Activated B cell treated with CpG ODN at 0.5 μM for 24 hours (primary cell): ENCODE measurements at regions of chr9 and their contacts with region 1.

Region 1: GRCh38 chr9:127779136-127779981 is 893 bp upstream of the SH2D3C start:
- DNase-seq: peak; percentile 63
- ATAC-seq: peak; percentile 61
- H3K4me3 Mint-ChIP-seq: peak overlapping the region; percentile 94
- H3K27ac Mint-ChIP-seq: peak overlapping the region; percentile 98
- H3K4me1 Mint-ChIP-seq: peaks cover 70% of the 10 kb centered on the region
- H3K27me3 Mint-ChIP-seq: no peaks in the 10 kb centered on the region
- CTCF ChIP-seq: no peak

Region 2: DNA sequence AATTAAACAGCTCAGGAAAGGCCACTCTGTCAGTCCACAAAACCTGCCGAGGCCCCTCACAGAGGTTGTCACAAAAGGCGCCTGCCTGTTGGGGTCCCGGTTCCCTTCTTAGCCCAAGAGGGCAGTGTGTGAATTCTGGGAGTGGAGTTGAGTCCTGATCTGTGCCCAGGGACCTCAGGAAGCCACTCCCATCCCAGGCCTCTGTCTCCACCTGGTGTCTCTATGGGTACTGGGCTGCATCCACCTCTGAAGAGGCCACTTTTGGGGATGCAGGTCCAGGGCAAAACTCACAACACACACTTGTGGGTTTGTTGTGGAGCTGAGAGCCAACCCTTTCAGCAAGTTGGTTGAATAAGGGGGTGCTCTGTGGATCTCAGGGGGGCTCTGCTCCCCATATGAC is 241.6 kb before region 1 on chr9:
- CTCF ChIA-PET with region 1: no interaction called
- POLR2A ChIA-PET with region 1: interaction called, 16 read pairs
- intact Hi-C with region 1: no loop called
- DNase-seq: no peak
- ATAC-seq: no peak
- H3K4me3 Mint-ChIP-seq: no peak overlapping the region
- H3K27ac Mint-ChIP-seq: no peak overlapping the region
- H3K4me1 Mint-ChIP-seq: no peaks in the 10 kb centered on the region
- H3K27me3 Mint-ChIP-seq: no peaks in the 10 kb centered on the region
- CTCF ChIP-seq: no peak

Region 3: GRCh38 chr9:127763918-127764384 is 15.4 kb before region 1 on chr9:
- CTCF ChIA-PET with region 1: interaction called, 32 read pairs
- POLR2A ChIA-PET with region 1: interaction called, 96 read pairs
- intact Hi-C with region 1: no loop called
- DNase-seq: no peak
- ATAC-seq: peak; percentile 51
- H3K4me3 Mint-ChIP-seq: no peak overlapping the region
- H3K27ac Mint-ChIP-seq: peak overlapping the region; percentile 60
- H3K4me1 Mint-ChIP-seq: peaks cover 61% of the 10 kb centered on the region
- H3K27me3 Mint-ChIP-seq: no peaks in the 10 kb centered on the region
- CTCF ChIP-seq: no peak

Region 4: GRCh38 chr9:127796225-127796813 is 17.0 kb after region 1 on chr9:
- CTCF ChIA-PET with region 1: no interaction called
- POLR2A ChIA-PET with region 1: interaction called, 11 read pairs
- intact Hi-C with region 1: no loop called
- DNase-seq: no peak
- ATAC-seq: peak; percentile 45
- H3K4me3 Mint-ChIP-seq: peak overlapping the region; percentile 64
- H3K27ac Mint-ChIP-seq: peak overlapping the region; percentile 75
- H3K4me1 Mint-ChIP-seq: peaks cover 32% of the 10 kb centered on the region
- H3K27me3 Mint-ChIP-seq: no peaks in the 10 kb centered on the region
- CTCF ChIP-seq: no peak

Region 5: DNA sequence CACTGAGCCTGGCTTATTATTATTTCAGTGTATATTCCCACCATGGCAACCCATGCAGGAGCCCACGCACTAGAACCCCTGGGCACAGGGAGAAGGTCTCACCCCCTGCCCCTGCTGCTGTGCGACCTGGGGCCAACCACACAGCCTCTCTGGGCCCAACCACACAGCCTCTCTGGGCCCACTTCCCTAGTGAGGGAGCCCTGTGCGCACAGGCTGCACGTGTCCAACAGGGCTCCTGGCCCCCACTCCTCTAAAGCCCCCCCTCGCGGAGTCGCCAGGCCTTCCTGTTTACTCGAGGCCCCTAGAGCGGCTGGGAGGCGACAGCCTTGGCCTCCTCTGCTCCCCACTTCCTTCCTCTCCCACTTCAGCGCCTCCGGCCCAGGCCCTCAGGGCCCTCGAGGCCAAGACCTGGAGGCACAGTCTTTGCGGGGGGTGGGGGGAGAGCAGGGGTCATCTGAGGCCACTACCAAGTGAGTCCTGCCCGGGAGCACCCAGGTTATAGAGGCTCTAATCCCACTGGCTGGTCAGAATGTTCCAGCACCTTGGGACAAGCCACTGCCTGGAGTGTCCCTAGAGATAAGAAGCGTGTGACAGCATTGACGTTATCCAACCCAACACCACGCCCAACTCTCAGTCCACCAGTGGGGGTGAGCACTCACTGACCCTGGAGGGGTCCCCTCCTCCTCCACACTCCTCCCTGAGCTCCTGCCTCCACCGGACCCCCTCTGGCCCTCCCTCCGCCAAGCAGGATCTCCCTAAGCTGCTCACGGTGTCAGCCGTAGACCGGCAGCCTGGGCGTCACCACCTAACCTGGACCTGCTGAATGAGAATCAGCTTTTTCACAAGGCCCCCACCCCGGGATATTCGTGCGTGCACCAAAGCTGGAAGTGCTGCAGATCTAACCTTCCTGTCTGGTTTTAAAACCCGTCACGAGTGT is 83.0 kb after region 1 on chr9:
- CTCF ChIA-PET with region 1: interaction called, 3 read pairs
- POLR2A ChIA-PET with region 1: interaction called, 11 read pairs
- intact Hi-C with region 1: no loop called
- DNase-seq: peak; percentile 48
- ATAC-seq: peak; percentile 60
- H3K4me3 Mint-ChIP-seq: peak overlapping the region; percentile 41
- H3K27ac Mint-ChIP-seq: peak overlapping the region; percentile 93
- H3K4me1 Mint-ChIP-seq: peaks cover 65% of the 10 kb centered on the region
- H3K27me3 Mint-ChIP-seq: no peaks in the 10 kb centered on the region
- CTCF ChIP-seq: no peak

Region 6: GRCh38 chr9:127899128-127899946 is 120.0 kb after region 1 on chr9 and contains the start of gene ST6GALNAC6:
- CTCF ChIA-PET with region 1: no interaction called
- POLR2A ChIA-PET with region 1: interaction called, 10 read pairs
- intact Hi-C with region 1: no loop called
- DNase-seq: peak; percentile 84
- ATAC-seq: peak; percentile 81
- H3K4me3 Mint-ChIP-seq: peak within 1 kb of the TSS; percentile 88
- H3K27ac Mint-ChIP-seq: peak within 1 kb of the TSS; percentile 76
- H3K4me1 Mint-ChIP-seq: peaks cover 55% of the 10 kb centered on the region
- H3K27me3 Mint-ChIP-seq: no peaks in the 10 kb centered on the region
- CTCF ChIP-seq: no peak
- total RNA-seq, gene ST6GALNAC6: 39.9 and 47.5 TPM in 2 replicates

Region 7: GRCh38 chr9:127905004-127905728 is 125.8 kb after region 1 on chr9:
- CTCF ChIA-PET with region 1: no interaction called
- POLR2A ChIA-PET with region 1: interaction called, 11 read pairs
- intact Hi-C with region 1: no loop called
- DNase-seq: peak; percentile 39
- ATAC-seq: peak; percentile 50
- H3K4me3 Mint-ChIP-seq: peak overlapping the region; percentile 80
- H3K27ac Mint-ChIP-seq: peak overlapping the region; percentile 98
- H3K4me1 Mint-ChIP-seq: peaks cover 72% of the 10 kb centered on the region
- H3K27me3 Mint-ChIP-seq: no peaks in the 10 kb centered on the region
- CTCF ChIP-seq: no peak

Region 8: DNA sequence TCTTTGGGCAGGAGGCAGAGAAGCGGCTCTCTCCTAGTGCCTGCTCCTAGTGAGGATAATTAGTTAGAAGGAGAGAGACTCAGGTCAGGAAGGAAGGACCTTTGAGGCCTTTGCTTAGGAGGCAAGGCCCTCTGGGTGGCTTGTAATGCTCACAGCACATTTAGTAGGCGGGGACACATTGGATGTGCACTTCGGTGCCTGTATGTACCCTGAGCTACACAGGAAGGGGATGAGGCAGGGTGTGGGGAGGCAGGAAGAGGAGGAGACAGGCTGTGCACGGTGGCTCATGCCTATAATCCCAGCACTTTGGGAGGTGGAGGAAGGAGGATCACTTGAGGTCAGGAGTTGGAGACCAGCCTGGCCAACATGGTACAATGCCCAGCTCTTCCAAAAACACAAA is 362.7 kb after region 1 on chr9:
- CTCF ChIA-PET with region 1: no interaction called
- POLR2A ChIA-PET with region 1: no interaction called
- intact Hi-C with region 1: no loop called
- DNase-seq: no peak
- ATAC-seq: no peak
- H3K4me3 Mint-ChIP-seq: no peak overlapping the region
- H3K27ac Mint-ChIP-seq: no peak overlapping the region
- H3K4me1 Mint-ChIP-seq: no peaks in the 10 kb centered on the region
- H3K27me3 Mint-ChIP-seq: peaks cover 5% of the 10 kb centered on the region
- CTCF ChIP-seq: no peak